Activated T-helper 2 cell treated with anti-CD3 and anti-CD28 coated beads, Interferon-gamma antibody, Interleukin-2, Interleukin-4, amounts not matched to agents 10 μg/mL and 5 μg/mL and 100 μg/mL, durations not matched to agents 14 hours and 24 hours and 36 hours (primary cell): ENCODE measurements at regions of chr2 and their contacts with region 1.

Region 1: GRCh38 chr2:40004336-40004735 is 225.3 kb upstream of the THUMPD2 start:
- DNase-seq: no peak
- H3K4me3 Mint-ChIP-seq: no peak overlapping the region
- H3K27ac Mint-ChIP-seq: no peak overlapping the region
- H3K4me1 Mint-ChIP-seq: peaks cover 14% of the 10 kb centered on the region
- H3K27me3 Mint-ChIP-seq: no peaks in the 10 kb centered on the region

Region 2: DNA sequence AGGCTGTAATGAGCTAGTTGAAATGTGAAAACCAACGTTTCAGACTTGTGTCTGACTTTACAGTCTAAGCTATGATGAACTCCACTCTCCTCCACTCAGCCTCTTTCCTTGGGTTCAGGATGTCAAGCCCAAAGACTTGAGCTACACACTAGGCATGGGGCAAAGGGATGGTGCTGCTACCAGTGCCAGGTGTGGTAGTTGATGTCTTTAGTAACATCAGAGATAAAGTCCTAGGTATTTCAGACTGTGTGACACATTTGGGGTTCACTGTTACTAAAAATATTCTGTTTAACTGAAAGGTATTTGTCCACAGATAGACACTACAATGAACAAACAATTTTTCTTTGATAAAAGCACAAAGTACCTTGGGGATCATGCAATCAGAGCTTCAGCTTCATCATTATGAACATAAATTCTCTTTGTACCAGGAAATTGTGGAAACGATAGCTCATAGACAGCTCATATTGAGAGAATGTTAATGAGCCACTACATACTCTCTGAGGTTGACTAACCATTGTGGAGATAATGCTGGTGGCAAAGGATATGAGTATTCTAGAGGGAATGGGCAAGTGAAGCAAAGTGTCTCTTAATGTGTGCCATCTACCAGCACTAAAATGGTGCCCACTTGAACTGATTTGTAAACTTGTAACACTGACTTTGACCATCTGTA is 28.4 kb after region 1 on chr2:
- intact Hi-C with region 1: loop called (anchors 2 kb)
- DNase-seq: no peak
- H3K4me3 Mint-ChIP-seq: no peak overlapping the region
- H3K27ac Mint-ChIP-seq: peak overlapping the region; percentile 75
- H3K4me1 Mint-ChIP-seq: peaks cover 45% of the 10 kb centered on the region
- H3K27me3 Mint-ChIP-seq: no peaks in the 10 kb centered on the region